ENCODE measurements at regions of chr2 and their contacts with region 1.

Region 1: GRCh38 chr2:40448468-40449079 is 3.3 kb downstream of the SLC8A1 start:
- DNase-seq: peak; percentile 52
- ATAC-seq: no peak
- H3K4me3 ChIP-seq: no peak overlapping the region
- H3K27ac ChIP-seq: no peak overlapping the region
- H3K4me1 ChIP-seq: peaks cover 6% of the 10 kb centered on the region
- H3K27me3 ChIP-seq: no peaks in the 10 kb centered on the region
- CTCF ChIP-seq: peak; percentile 51
- POLR2A ChIP-seq: no peak
- RAD21 ChIP-seq: peak; percentile 44

Region 2: DNA sequence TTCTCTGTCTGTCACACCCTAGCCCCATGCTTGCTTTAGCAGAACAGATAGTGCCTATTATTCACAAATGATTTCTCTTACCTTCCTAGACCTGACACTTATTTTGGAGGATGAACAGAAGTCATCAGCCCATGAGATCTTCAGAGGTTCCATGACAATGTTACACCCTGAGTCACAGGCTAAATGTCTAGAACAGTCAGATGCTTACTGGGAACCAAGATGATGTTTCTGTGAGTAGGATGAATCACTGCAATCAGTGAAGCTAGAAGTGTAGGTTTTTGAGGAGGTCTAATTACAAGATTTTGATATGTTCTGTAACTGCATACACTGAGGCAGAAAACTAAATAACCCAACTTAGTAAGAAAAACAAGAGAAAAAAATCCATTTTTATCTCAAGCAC is 546.5 kb before region 1 on chr2:
- CTCF ChIA-PET with region 1: no interaction called
- POLR2A ChIA-PET with region 1: no interaction called
- dilution Hi-C with region 1: no loop called
- in situ Hi-C with region 1: loop called (anchors 10 kb)
- intact Hi-C with region 1: no loop called
- DNase-seq: peak; percentile 85
- ATAC-seq: peak; percentile 91
- H3K4me3 ChIP-seq: no peak overlapping the region
- H3K27ac ChIP-seq: no peak overlapping the region
- H3K4me1 ChIP-seq: no peaks in the 10 kb centered on the region
- H3K27me3 ChIP-seq: no peaks in the 10 kb centered on the region; the same call in 1 of the 2 replicates
- CTCF ChIP-seq: no peak
- POLR2A ChIP-seq: no peak
- RAD21 ChIP-seq: no peak

Region 3: GRCh38 chr2:40032650-40033319 is 415.8 kb before region 1 on chr2:
- CTCF ChIA-PET with region 1: no interaction called
- POLR2A ChIA-PET with region 1: no interaction called
- dilution Hi-C with region 1: no loop called
- in situ Hi-C with region 1: no loop called
- intact Hi-C with region 1: loop called (anchors 10 kb)
- DNase-seq: peak; percentile 92
- ATAC-seq: peak; percentile 67
- H3K4me3 ChIP-seq: no peak overlapping the region
- H3K27ac ChIP-seq: peak overlapping the region; percentile 98
- H3K4me1 ChIP-seq: peaks cover 19% of the 10 kb centered on the region
- H3K27me3 ChIP-seq: no peaks in the 10 kb centered on the region
- CTCF ChIP-seq: no peak
- POLR2A ChIP-seq: no peak
- RAD21 ChIP-seq: no peak

Region 4: GRCh38 chr2:40127890-40128557 is 320.6 kb before region 1 on chr2:
- CTCF ChIA-PET with region 1: no interaction called
- POLR2A ChIA-PET with region 1: no interaction called
- dilution Hi-C with region 1: no loop called
- in situ Hi-C with region 1: no loop called
- intact Hi-C with region 1: loop called (anchors 2 kb)
- DNase-seq: peak; percentile 97
- ATAC-seq: peak; percentile 79
- H3K4me3 ChIP-seq: no peak overlapping the region
- H3K27ac ChIP-seq: peak overlapping the region; percentile 97
- H3K4me1 ChIP-seq: peaks cover 43% of the 10 kb centered on the region
- H3K27me3 ChIP-seq: no peaks in the 10 kb centered on the region
- CTCF ChIP-seq: no peak
- POLR2A ChIP-seq: no peak
- RAD21 ChIP-seq: peak; percentile 14; the same call in 1 of the 2 replicates

Region 5: GRCh38 chr2:40371525-40372282 is 76.9 kb before region 1 on chr2:
- CTCF ChIA-PET with region 1: interaction called, 3 read pairs
- POLR2A ChIA-PET with region 1: no interaction called
- dilution Hi-C with region 1: no loop called
- in situ Hi-C with region 1: no loop called
- intact Hi-C with region 1: loop called (anchors 5 kb)
- DNase-seq: peak; percentile 90
- ATAC-seq: peak; percentile 85
- H3K4me3 ChIP-seq: no peak overlapping the region
- H3K27ac ChIP-seq: peak overlapping the region; percentile 70
- H3K4me1 ChIP-seq: peaks cover 19% of the 10 kb centered on the region
- H3K27me3 ChIP-seq: no peaks in the 10 kb centered on the region
- CTCF ChIP-seq: no peak
- POLR2A ChIP-seq: peak; percentile 5
- RAD21 ChIP-seq: no peak

Measured in IMR-90 (cell line).